Activated T-helper 1 cell treated with anti-CD3 and anti-CD28 coated beads, Interleukin-12 subunit alpha, Interleukin-12 subunit beta, Interleukin-2, Interleukin-4 antibody, amounts not matched to agents 30 ng/mL and 10 ng/mL and 1 ng/mL, durations not matched to agents 14 hours and 24 hours and 36 hours (primary cell): ENCODE measurements at regions of chr16 and their contacts with region 1.

Region 1: DNA sequence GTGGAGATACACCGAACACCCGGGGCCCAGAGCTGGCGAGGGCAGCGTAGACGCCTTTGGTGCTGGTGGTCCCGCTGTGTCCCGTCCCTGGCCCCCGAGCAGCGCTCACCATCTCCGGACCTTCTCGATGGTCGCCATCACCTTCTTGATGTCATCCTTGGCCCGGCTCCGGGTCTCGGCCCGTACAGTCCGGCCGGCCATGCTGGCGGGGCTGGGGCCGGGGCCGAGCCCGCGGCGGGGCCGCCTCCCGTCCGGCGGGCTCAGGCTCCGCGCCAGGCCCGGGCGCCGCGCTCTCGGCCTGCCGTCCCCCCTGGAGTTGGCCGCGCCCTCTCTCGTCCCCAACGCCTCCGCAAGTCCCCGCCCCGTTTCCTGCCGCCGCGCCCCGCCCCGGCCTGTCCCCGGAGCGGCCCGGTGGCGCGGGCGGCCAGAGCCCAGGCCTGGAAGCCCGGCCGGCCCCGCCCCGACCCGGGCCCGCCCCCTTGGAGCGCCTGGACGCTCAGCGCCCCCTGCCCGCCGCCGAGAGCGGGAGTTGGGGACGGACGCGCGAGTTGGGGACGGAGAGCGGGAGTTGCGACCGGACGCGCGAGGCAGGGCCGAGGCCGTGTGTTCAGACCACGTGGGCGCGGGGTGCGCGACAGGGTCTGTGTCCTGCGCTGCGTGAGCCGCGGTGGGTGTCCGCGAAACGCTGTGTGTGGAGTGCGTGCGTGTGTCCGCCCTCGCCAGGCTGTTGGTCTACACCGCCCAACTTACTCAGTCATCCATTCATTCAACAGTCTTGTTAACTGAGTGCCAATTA is at the start of gene BCL7C:
- DNase-seq: peak; percentile 86
- H3K4me3 Mint-ChIP-seq: peak within 1 kb of the TSS; percentile 92
- H3K27ac Mint-ChIP-seq: peak within 1 kb of the TSS; percentile 78
- H3K4me1 Mint-ChIP-seq: peaks cover 39% of the 10 kb centered on the region
- H3K27me3 Mint-ChIP-seq: no peaks in the 10 kb centered on the region
- total RNA-seq, gene BCL7C: 23.1 and 25.3 TPM in 2 replicates

Region 2: DNA sequence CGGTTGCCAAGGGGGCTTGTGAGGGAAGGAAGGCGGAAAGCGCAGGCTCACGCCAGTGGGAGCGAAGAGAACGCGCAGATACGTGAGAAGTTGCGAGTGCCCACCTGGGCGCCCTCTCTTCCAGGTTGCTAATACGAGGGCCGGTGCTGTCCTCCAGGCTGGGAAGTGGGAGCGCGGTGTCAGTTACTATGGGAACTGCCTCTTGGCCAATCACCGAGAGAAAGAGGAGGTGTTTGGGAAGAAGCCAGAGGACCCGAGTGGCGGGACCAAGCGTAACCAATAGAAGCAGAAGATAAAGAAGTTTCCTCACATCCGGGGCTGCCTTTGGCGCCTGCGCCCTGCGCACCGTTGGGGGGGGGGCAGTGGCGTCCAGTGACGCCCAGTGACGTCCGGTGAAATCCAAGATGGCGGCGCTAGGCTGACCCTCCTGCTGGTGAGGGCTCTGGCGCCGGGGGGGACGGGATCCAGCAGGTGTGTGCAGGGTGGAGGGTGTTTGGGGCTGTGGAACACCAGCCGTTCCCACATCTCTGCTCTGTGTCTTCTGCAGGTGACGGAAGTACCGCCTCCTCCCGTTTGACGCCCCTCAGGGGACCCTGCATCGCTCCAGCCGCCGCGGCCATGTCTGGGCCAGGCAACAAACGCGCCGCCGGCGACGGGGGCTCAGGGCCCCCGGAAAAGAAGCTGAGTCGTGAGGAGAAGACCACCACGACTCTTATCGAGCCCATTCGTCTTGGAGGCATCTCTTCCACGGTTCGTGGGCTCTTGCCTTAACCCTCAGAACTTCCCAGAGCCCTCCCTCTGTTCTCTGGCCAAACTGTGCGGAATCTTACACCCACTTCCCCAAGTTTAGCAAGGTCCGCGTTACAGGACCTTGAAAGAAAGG is 131.8 kb before region 1 on chr16 and contains the starts of genes CFAP119 and RNF40:
- intact Hi-C with region 1: loop called (anchors 5 kb)
- DNase-seq: peak; percentile 95
- H3K4me3 Mint-ChIP-seq: peak within 1 kb of the TSS; percentile 93
- H3K27ac Mint-ChIP-seq: peak within 1 kb of the TSS; percentile 82
- H3K4me1 Mint-ChIP-seq: peaks cover 28% of the 10 kb centered on the region
- H3K27me3 Mint-ChIP-seq: no peaks in the 10 kb centered on the region
- total RNA-seq, gene CFAP119: 4.4 and 5.6 TPM in 2 replicates
- total RNA-seq, gene RNF40: 98.2 and 98.5 TPM in 2 replicates

Region 3: DNA sequence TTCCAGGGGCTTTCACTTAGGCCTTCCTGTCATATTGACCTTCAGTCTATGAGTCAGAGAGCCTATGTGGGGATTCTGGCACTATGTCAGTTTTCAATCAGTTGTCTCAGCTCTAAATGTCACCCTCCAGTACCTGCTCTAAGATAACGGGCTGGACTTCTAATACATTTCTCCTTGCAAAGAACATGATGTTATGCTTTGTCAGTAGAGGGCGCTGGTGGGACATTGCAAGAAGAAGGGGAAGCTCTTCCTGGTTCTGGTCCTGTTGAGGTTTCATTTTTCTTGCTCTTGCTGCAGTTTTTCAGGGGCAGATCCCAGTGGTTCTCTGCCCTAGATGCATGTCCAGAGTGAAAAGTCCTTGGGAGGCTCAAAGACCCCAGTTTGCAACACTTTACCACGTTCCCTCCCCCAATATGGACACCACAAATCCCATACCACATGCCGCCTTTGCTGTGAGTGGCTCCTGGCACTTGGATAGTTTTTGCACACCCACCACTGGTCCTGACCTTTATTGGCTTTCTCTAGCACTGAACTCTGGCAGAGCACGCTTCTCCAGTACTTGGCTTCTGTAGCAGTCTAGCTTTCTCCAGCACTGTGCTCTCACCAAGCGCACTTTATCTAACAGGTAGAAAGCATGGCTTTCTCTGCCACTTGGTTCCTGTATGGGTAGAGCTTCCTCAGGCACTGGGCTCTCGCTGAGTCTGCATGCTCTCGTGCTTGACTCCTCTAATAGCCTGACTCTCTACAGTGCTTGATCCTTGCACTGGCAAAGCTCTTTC is 49.1 kb before region 1 on chr16:
- intact Hi-C with region 1: loop called (anchors 1 kb)
- DNase-seq: peak; percentile 77
- H3K4me3 Mint-ChIP-seq: no peak overlapping the region
- H3K27ac Mint-ChIP-seq: peak overlapping the region; percentile 13
- H3K4me1 Mint-ChIP-seq: peaks cover 12% of the 10 kb centered on the region
- H3K27me3 Mint-ChIP-seq: peaks cover 1% of the 10 kb centered on the region

Region 4: DNA sequence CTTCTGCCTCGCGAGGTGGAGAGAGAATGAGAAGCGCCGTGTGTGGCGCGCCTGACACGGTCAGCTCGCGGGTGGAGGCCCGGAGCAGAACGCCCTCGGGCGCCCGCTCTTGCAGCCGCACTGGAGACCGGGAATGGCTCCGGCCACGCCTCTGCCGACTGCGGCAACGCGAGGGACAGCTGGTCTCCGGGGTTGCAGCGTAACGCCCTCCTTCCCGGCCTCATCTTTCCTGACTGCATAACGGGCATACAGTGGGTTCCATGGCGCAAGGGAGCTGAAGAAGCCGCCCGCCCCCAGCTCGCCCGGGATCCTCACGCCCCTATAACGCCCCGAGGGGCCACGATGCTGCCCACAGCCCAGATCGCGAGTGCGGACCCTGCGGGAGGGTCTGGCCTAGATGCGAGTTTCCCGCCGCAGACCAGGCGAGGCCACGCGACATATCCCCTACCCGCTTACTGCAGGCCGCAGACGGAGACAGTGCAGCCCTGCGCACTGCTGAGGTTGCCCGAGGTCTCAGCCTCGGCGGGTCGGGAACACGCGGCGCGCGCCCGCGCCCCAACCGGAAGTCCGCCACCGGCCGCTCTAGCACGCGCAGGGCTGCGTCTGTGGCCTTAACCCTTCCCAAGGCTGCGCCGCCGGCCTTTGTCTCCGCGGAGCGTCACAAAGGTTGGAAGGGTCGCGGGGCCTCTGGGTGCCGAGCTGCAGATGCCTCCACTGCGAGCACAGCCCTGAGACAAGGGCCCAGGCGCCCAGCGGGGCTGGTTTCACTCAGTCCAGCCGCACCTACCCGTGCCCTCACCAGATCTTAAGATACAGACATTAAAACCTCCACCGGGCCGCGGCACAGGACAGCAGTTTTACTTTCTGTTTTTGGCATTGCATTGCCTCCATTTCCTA is 18.9 kb before region 1 on chr16:
- intact Hi-C with region 1: loop called (anchors 1 kb)
- DNase-seq: peak; percentile 86
- H3K4me3 Mint-ChIP-seq: peak overlapping the region; percentile 97
- H3K27ac Mint-ChIP-seq: peak overlapping the region; percentile 94
- H3K4me1 Mint-ChIP-seq: peaks cover 23% of the 10 kb centered on the region
- H3K27me3 Mint-ChIP-seq: no peaks in the 10 kb centered on the region

Region 5: DNA sequence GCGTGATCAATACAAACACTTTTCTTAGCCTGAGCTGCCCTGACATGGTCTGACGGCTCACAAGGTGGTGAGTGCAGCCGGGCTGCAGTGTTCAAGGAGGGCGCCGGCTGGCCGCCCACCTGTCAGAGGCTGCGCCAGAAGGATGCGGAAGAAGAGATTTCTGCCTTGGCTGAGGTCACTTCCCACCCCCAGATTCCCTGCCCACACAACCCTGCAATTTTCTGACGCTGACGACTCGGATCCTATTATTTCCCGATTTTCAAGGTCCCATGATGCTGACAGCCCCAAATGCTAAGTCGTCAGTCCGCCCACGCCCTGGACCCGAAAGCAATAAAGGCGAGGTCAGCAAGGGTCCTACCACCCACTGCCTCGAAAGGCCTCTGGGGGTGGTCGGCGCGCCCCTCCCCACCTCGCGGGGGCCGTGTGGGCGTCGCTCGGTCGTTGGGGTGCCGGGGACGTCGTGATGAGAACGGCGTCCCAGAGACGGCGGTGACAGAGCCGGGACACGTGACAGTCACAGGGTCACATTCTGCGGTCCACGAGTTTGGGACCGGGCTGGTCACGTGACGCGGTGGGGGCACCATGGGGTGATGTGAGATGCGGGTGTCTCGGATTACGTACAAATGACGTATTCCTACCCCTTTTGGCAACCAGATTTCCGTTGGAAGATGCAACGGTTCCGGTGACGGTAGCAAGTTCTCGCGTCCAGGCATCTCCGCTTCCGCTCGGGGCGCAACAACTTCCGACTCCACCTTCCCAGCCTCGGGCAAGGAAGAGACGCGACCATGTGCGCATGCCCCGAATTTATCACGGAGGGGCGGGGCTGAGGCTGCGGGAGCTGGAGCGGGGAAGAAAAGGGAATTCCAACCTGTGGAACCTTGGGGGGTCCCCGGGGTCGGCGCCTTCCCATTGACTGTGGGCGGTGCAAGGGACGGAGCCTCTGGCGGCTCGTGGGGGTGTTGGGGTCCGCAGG is 139.1 kb after region 1 on chr16 and contains the start of gene STX4:
- intact Hi-C with region 1: loop called (anchors 1 kb)
- DNase-seq: peak; percentile 97
- H3K4me3 Mint-ChIP-seq: peak within 1 kb of the TSS; percentile 95
- H3K27ac Mint-ChIP-seq: peak within 1 kb of the TSS; percentile 92
- H3K4me1 Mint-ChIP-seq: peaks cover 24% of the 10 kb centered on the region
- H3K27me3 Mint-ChIP-seq: no peaks in the 10 kb centered on the region
- total RNA-seq, gene STX4: 56.4 and 58.7 TPM in 2 replicates